Left lung (tissue), 14 donors: ENCODE measurements at regions of chr20 and their contacts with region 1.

Region 1: DNA sequence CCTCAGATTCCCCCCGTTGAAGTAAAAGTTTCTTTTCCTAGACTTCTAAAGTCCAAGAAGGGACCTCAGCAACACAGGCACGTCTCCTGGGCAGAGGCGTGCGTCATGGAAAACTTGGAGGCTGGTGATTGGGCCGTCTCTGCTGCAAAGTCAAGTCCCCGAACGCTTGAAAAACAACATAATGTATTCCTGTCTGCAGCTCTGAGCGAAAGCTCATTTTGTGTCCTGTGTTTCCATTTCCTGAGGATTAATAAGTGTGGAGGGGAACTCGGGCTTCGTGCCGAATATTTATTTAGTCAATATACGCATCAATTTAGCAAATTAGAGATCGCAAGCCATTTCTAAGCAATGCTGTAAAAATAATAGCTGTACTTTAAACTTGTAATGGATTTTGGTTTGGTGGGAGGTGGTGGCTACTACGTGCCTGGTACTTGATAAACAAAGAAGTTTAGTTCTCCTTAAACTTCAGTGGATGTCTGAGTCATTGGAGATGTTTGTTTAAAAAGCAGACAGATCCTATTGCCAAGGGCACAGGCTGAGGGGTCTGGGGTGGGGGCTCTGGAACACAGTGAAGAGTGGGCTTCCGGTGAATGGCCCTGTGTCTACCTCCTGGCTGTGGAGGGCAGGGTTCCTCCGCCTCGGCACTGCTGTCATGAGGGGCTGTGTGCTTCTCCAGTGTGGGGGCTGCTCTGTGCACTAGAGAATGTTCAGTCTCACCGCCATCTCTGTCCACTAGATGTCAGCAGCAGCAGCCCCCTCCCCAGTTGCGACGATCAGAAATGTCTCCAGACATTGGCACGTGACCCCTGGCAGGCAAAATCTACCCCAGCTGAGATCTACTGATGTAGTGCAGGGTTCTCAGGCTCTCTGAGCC is 21.8 kb downstream of the PCK1 start:
- DNase-seq: peak in 3 of 4 donors; percentile 30 to 86 (median 57)
- ATAC-seq: peak; percentile 51
- H3K4me3 ChIP-seq: no peak overlapping the region
- H3K27ac ChIP-seq: peak overlapping the region; percentile 42 to 65
- H3K4me1 ChIP-seq: peaks cover 0 to 25% of the 10 kb centered on the region in 2 donors
- H3K27me3 ChIP-seq: peaks cover 0 to 90% of the 10 kb centered on the region in 2 donors
- CTCF ChIP-seq: peak in 1 of 2 donors; percentile 28

Region 2: GRCh38 chr20:57388953-57389694 is 193.5 kb before region 1 on chr20:
- intact Hi-C with region 1: loop called in 1 of 2 experiments (anchors 10 kb)
- DNase-seq: peak; percentile 43 to 94 (median 78)
- ATAC-seq: peak; percentile 89
- H3K4me3 ChIP-seq: peak overlapping the region; percentile 25 to 42
- H3K27ac ChIP-seq: peak overlapping the region; percentile 37 to 73
- H3K4me1 ChIP-seq: peaks cover 6 to 56% of the 10 kb centered on the region in 2 donors
- H3K27me3 ChIP-seq: no peaks in the 10 kb centered on the region
- CTCF ChIP-seq: peak in 1 of 2 donors; percentile 30

Region 3: GRCh38 chr20:57522380-57522993 is 60.2 kb before region 1 on chr20:
- intact Hi-C with region 1: loop called in 1 of 2 experiments (anchors 5 kb)
- DNase-seq: no peak
- ATAC-seq: no peak
- H3K4me3 ChIP-seq: no peak overlapping the region
- H3K27ac ChIP-seq: no peak overlapping the region
- H3K4me1 ChIP-seq: no peaks in the 10 kb centered on the region
- H3K27me3 ChIP-seq: no peaks in the 10 kb centered on the region
- CTCF ChIP-seq: no peak